Pancreas (tissue), 10 donors: ENCODE measurements at regions of chr1 and their contacts with region 1.

Region 1: GRCh38 chr1:156499842-156500546 is 581 bp downstream of the MEF2D start:
- DNase-seq: peak; percentile 56 to 86 (median 72)
- ATAC-seq: peak in 3 of 4 donors; percentile 1 to 3 (median 3)
- H3K4me3 ChIP-seq: peak overlapping the region; percentile 95 to 98 (median 98)
- H3K27ac ChIP-seq: peak overlapping the region; percentile 99 to 100 (median 100)
- H3K4me1 ChIP-seq: peaks cover 54 to 68% (median 61%) of the 10 kb centered on the region in 3 donors
- H3K27me3 ChIP-seq: no peaks in the 10 kb centered on the region
- CTCF ChIP-seq: no peak

Region 2: DNA sequence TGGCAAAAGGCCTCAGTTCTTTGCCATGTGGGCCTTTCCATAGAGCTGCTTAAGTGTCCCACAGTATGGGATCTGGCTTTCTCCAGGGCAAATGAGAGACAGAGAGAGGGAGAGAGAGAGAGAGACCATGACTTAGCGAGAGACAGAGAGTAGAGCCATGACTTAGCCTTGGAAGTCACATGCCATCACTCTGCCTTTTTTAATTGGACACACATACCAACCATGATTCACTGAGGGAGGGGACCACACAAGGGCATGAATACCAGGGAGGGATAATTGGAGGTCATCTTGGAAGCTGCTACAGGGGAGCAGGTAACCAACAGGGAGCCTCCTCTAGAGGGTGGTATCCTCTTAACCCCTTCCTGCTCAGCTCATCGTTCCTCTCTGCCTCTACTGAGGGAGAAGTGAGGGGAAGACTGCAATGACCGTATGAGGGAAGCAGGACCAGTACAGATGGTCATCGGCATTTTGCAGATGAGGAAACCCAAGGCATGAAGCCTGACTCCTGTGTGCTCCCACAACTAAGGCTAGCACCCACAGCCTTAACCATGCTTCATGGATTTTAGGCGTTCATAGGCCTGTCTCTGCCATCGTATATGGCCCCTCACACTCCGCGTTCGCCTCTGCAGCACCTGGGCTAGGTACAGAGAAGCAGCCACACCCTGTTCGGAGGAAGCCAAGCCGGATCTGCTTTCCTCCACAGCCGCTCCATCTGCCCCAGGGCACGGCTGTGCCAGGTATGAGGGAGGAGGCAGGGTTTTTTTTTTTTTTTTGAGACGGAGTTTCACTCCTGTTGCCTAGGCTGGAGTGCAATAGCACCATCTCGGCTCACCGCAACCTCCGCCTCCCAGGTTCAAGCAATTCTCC is 38.0 kb before region 1 on chr1:
- intact Hi-C with region 1: loop called in 2 of 3 experiments (anchors 5 kb)
- DNase-seq: peak in 1 of 6 donors; percentile 14
- ATAC-seq: no peak
- H3K4me3 ChIP-seq: no peak overlapping the region
- H3K27ac ChIP-seq: no peak overlapping the region
- H3K4me1 ChIP-seq: peaks cover 0 to 5% (median 3%) of the 10 kb centered on the region in 3 donors
- H3K27me3 ChIP-seq: no peaks in the 10 kb centered on the region
- CTCF ChIP-seq: no peak